Naive thymus-derived CD4-positive, alpha-beta T cell (primary cell): ENCODE measurements at regions of chr2 and their contacts with region 1.

Region 1: DNA sequence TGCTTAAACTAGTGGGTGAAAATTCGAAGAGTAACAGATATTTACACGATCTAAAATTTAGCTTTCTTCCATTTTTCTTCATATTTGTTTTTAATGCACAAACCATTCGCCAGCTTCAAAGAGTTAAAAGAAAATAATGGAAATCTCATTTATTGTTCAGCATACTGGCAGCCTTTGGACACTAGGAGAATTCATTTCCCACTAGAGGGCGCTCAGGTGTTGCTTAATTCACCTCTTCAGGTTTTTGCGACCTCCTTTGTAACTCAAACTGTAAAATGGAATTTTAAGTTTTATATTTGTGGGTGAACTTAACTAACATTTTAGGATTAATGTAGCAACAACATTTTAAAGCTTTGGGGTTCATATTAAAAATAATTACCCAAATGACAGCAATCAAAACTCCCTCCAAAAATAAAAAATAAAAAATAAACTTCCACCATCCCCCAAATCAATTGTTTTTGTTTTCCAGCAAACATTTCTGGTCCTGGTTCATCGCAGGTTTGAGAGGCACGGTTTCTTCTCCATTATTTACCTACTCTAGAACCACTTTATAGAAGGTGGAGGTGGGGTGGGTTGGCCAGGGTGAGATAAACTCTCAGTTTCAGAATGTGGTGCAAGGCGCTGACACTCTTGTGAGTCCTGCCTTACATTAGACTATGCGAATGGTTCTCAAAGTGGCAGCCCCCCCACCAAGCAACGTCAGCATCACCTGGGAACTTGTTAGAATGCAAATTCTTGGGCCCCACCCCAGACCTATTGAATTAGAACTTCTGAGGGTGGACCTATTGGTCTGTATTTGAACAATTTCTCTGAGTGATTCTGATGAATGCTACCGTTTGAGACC is 24.7 kb upstream of the PNPT1 start:
- DNase-seq: peak in 6 of 9 donors; percentile 16 to 43 (median 32)
- ATAC-seq: peak; percentile 59
- H3K4me3 ChIP-seq: no peak overlapping the region
- H3K4me3 Mint-ChIP-seq: no peak overlapping the region
- H3K27ac ChIP-seq: no peak overlapping the region
- H3K27ac Mint-ChIP-seq: no peak overlapping the region
- H3K4me1 ChIP-seq: no peaks in the 10 kb centered on the region
- H3K4me1 Mint-ChIP-seq: no peaks in the 10 kb centered on the region
- H3K27me3 ChIP-seq: no peaks in the 10 kb centered on the region
- H3K27me3 Mint-ChIP-seq: peaks cover 0 to 11% (median under 1%) of the 10 kb centered on the region in 5 donors

Region 2: GRCh38 chr2:55500025-55500424 is 218.4 kb before region 1 on chr2:
- CTCF ChIA-PET with region 1: no interaction called
- POLR2A ChIA-PET with region 1: no interaction called
- intact Hi-C with region 1: no loop called
- DNase-seq: no peak
- ATAC-seq: no peak
- H3K4me3 ChIP-seq: no peak overlapping the region
- H3K4me3 Mint-ChIP-seq: no peak overlapping the region
- H3K27ac ChIP-seq: no peak overlapping the region
- H3K27ac Mint-ChIP-seq: no peak overlapping the region
- H3K4me1 ChIP-seq: no peaks in the 10 kb centered on the region
- H3K4me1 Mint-ChIP-seq: no peaks in the 10 kb centered on the region
- H3K27me3 ChIP-seq: no peaks in the 10 kb centered on the region
- H3K27me3 Mint-ChIP-seq: no peaks in the 10 kb centered on the region

Region 3: GRCh38 chr2:55961318-55961911 is 243.0 kb after region 1 on chr2:
- CTCF ChIA-PET with region 1: no interaction called
- POLR2A ChIA-PET with region 1: no interaction called
- intact Hi-C with region 1: loop called in 1 of 2 experiments (anchors 1 kb)
- DNase-seq: no peak
- ATAC-seq: no peak
- H3K4me3 ChIP-seq: no peak overlapping the region
- H3K4me3 Mint-ChIP-seq: no peak overlapping the region
- H3K27ac ChIP-seq: no peak overlapping the region
- H3K27ac Mint-ChIP-seq: no peak overlapping the region
- H3K4me1 ChIP-seq: no peaks in the 10 kb centered on the region
- H3K4me1 Mint-ChIP-seq: no peaks in the 10 kb centered on the region
- H3K27me3 ChIP-seq: no peaks in the 10 kb centered on the region
- H3K27me3 Mint-ChIP-seq: peaks cover 0 to 21% (median 5%) of the 10 kb centered on the region in 5 donors

Region 4: DNA sequence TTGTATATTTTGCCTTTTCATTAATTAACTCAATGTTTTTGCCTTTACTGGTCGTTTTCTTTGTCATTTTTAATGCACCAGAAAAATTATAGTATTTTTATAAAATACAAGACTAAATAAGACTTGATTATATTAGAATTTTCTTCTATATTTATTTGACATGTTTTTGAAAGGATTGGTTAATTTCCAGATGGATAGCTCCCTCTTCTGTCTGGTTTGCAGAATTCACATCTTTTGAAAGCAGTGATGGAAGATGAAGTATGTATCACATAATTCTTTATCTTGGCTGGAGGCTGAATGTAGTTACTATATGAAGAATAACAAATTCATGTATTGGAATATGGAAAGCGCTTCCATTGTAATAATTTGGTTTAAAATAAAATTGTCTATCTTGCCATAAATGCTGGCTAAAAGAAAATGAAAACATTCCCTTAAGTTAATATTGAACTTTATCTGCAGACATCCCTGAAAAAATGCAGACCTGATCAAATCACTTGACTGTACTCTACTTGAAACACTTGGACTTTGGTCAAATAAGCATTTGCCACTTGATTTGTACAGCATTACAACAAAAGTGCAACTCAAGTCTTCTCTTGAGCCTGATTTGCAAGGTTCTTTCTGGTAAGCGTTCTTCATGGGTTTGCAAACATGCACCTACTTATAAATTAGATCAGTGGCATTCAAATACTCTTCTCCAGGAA is 291.5 kb after region 1 on chr2:
- CTCF ChIA-PET with region 1: no interaction called
- POLR2A ChIA-PET with region 1: no interaction called
- intact Hi-C with region 1: loop called in 1 of 2 experiments (anchors 5 kb)
- DNase-seq: no peak
- ATAC-seq: no peak
- H3K4me3 ChIP-seq: no peak overlapping the region
- H3K4me3 Mint-ChIP-seq: no peak overlapping the region
- H3K27ac ChIP-seq: no peak overlapping the region
- H3K27ac Mint-ChIP-seq: no peak overlapping the region
- H3K4me1 ChIP-seq: no peaks in the 10 kb centered on the region
- H3K4me1 Mint-ChIP-seq: no peaks in the 10 kb centered on the region
- H3K27me3 ChIP-seq: no peaks in the 10 kb centered on the region
- H3K27me3 Mint-ChIP-seq: peaks cover 0 to 5% (median 0%) of the 10 kb centered on the region in 5 donors

Region 5: GRCh38 chr2:56132138-56132537 is 413.8 kb after region 1 on chr2:
- CTCF ChIA-PET with region 1: no interaction called
- POLR2A ChIA-PET with region 1: no interaction called
- intact Hi-C with region 1: loop called in 1 of 2 experiments (anchors 1 kb)
- DNase-seq: peak in 1 of 9 donors; percentile 1
- ATAC-seq: no peak
- H3K4me3 ChIP-seq: no peak overlapping the region
- H3K4me3 Mint-ChIP-seq: no peak overlapping the region
- H3K27ac ChIP-seq: no peak overlapping the region
- H3K27ac Mint-ChIP-seq: no peak overlapping the region
- H3K4me1 ChIP-seq: no peaks in the 10 kb centered on the region
- H3K4me1 Mint-ChIP-seq: no peaks in the 10 kb centered on the region
- H3K27me3 ChIP-seq: no peaks in the 10 kb centered on the region
- H3K27me3 Mint-ChIP-seq: peaks cover 0 to 5% (median 0%) of the 10 kb centered on the region in 5 donors

Region 6: DNA sequence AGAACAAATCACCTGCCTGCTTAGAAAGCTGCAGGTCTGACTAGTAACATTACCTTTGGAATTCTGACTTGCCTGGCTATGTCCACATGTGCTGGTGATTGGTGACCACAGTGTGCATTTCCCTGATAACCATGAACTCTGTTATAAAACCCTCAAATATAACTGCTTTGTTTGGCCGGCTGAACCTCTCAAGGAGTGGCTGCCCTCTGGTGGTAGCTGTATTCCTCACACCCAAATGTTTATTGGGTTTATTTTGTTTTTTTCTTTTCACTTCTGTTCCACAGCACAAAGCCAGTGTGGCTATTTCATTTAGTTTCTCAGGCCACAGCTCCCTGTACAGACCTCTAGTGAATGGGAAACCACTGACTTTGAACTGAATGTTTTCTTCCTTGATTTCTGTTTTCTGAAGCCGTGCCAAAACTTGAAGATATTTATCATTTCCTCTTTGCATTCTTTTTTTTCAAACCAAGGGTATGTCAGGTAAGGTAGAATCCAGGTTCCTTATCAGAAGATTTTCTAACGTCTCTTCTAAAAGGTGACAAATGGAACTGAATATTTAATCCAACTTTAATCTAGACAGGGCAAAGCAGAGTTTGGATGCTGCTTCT is 1779.2 kb after region 1 on chr2:
- CTCF ChIA-PET with region 1: no interaction called
- POLR2A ChIA-PET with region 1: no interaction called
- intact Hi-C with region 1: loop called in 1 of 2 experiments (anchors 1 kb)
- DNase-seq: peak in 3 of 9 donors; percentile 2 to 20 (median 10)
- ATAC-seq: peak; percentile 56
- H3K4me3 ChIP-seq: no peak overlapping the region
- H3K4me3 Mint-ChIP-seq: no peak overlapping the region
- H3K27ac ChIP-seq: no peak overlapping the region
- H3K27ac Mint-ChIP-seq: no peak overlapping the region
- H3K4me1 ChIP-seq: no peaks in the 10 kb centered on the region
- H3K4me1 Mint-ChIP-seq: peaks cover 0 to 4% (median 0%) of the 10 kb centered on the region in 7 donors
- H3K27me3 ChIP-seq: no peaks in the 10 kb centered on the region
- H3K27me3 Mint-ChIP-seq: no peaks in the 10 kb centered on the region